ENCODE measurements at regions of chr17 and their contacts with region 1.

Region 1: GRCh38 chr17:68318103-68318991 is 27.1 kb downstream of the ARSG start:
- DNase-seq: peak in 1 of 9 experiments; percentile 31
- ATAC-seq: no peak
- H3K4me3 ChIP-seq: no peak overlapping the region
- H3K4me3 Mint-ChIP-seq: no peak overlapping the region
- H3K27ac ChIP-seq: no peak overlapping the region
- H3K27ac Mint-ChIP-seq: no peak overlapping the region
- H3K4me1 ChIP-seq: peaks cover 36% of the 10 kb centered on the region
- H3K4me1 Mint-ChIP-seq: peaks cover 46% of the 10 kb centered on the region
- H3K27me3 ChIP-seq: no peaks in the 10 kb centered on the region
- H3K27me3 Mint-ChIP-seq: no peaks in the 10 kb centered on the region
- CTCF ChIP-seq: no peak

Region 2: DNA sequence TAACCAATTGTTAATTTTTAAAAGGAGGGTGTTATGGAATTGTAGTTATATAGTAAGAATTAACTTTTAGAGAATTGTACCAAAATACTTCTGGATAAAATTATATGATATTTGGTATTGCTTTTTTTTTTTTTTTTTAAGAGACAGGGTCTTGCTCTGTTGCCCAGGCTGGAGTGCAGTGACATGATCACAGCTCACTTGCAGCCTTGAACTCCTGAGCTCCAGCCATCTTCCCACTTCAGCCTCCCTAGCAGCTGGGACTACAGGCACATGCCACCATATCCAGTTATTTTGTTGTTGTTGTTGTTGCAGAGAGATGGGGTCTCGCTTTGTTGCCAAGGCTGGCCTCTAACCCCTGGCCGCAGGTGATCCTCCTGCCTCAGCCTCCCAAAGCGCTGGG is 18.5 kb before region 1 on chr17:
- CTCF ChIA-PET with region 1: interaction called, 4 read pairs
- POLR2A ChIA-PET with region 1: interaction called, 4 read pairs
- intact Hi-C with region 1: loop called (anchors 1 to 2 kb)
- DNase-seq: no peak
- ATAC-seq: no peak
- H3K4me3 ChIP-seq: no peak overlapping the region
- H3K4me3 Mint-ChIP-seq: no peak overlapping the region
- H3K27ac ChIP-seq: no peak overlapping the region
- H3K27ac Mint-ChIP-seq: no peak overlapping the region
- H3K4me1 ChIP-seq: peaks cover 38% of the 10 kb centered on the region
- H3K4me1 Mint-ChIP-seq: peaks cover 53% of the 10 kb centered on the region
- H3K27me3 ChIP-seq: no peaks in the 10 kb centered on the region
- H3K27me3 Mint-ChIP-seq: no peaks in the 10 kb centered on the region
- CTCF ChIP-seq: no peak